ENCODE measurements at regions of chr6 and their contacts with region 1.

Region 1: DNA sequence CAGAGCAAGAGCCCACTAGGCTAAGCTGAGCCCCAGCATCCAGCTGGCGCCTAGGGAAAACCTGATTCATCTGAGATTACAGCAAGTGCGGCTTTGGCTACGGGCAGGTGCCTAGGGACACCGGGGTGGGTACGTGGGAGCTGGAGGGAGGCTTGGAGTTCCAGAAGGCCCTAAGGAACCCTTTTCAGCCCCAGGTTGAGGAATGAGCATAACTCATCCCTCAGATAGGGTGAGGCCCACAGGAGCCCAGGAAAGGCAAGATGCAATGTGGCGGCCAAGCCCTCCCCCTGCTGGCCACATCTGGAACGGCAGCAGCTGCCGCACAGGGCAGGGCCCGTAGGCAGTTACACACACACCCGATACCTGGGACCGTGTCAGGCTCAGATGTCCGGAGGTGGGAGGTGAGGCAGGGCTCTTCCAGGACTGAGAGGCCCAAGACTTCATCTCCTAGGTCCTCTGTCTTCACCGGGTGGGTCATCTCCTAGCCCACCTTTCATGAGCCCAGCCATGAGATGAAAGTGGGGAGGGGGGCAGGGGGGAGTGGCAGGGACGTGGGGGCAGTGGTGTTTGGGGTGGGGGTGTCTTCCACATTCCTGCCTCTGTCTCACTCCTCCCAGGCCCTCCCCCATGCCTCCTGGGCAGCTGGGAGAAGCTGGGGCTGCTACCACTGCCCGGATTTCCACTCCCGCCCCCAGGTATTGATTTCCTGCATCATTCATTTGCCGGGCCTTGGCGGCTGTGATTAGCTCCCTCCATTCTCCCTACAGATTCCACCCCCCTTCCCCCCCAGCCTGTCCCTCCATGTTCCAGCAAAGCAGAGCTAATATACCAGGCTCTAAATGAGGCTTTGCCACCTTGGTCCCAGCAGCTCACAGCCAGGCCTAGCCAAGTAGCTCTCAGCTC is 5.5 kb downstream of the MDGA1 start:
- DNase-seq: peak; percentile 51
- ATAC-seq: peak; percentile 94
- H3K4me3 ChIP-seq: peak overlapping the region in 1 of 2 experiments; percentile 41; a peak in 1 of 4 replicates
- H3K27ac ChIP-seq: no peak overlapping the region
- H3K4me1 ChIP-seq: peaks cover 6 to 28% of the 10 kb centered on the region in 2 experiments; a peak in 3 of 4 replicates
- H3K27me3 ChIP-seq: no peaks in the 10 kb centered on the region
- CTCF ChIP-seq: peak; percentile 91 to 98 (median 96)
- POLR2A ChIP-seq: no peak
- RAD21 ChIP-seq: peak; percentile 100

Region 2: DNA sequence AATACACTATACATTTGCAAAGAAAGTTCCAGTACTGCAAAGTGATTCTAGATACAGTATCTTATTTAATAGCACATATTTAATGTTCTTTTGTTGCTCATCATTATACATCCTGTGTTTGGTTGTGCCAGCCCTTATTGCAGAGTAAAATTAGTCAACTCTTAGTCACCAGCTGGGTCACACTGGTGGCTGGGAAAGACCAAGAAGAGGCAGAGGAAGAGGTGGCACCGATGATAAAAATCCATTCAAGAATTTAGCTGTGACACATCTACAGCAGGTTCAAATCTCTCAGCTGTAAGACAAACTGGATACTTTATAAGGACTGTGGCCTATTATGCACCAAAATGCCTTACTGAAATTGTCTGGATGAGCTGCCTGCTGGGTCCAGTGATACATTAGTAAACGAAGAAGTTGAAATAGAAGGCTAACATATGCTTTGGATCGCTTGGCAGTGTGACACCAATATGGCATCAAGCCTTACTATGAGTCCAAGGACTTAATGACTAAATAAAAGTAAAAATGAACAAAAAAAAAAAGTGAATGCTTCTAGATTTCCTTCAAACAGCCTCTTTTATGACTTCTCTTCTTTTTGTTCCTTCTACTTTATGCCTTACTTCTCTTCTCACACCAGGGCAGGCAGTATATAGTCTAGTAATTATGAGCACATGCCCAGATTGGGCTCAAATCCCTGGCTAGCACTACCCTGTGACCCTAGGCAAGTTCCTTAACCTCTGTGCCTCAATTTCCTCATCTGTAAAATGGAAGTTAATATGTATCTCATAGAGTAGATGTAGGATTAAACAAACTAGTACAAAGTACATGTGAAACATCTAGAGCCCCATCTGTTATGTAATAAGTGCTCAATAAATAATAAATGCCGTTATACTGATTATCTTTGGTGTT is 367.8 kb before region 1 on chr6:
- CTCF ChIA-PET with region 1: interaction called, 7 read pairs
- POLR2A ChIA-PET with region 1: no interaction called
- RAD21 ChIA-PET with region 1: no interaction called
- intact Hi-C with region 1: loop called (anchors 10 kb)
- DNase-seq: peak; percentile 28
- ATAC-seq: peak; percentile 35; the same call in 1 of the 2 replicates
- H3K4me3 ChIP-seq: no peak overlapping the region
- H3K27ac ChIP-seq: no peak overlapping the region
- H3K4me1 ChIP-seq: peaks cover 0 to 22% of the 10 kb centered on the region in 2 experiments; a peak in 2 of 4 replicates
- H3K27me3 ChIP-seq: no peaks in the 10 kb centered on the region
- CTCF ChIP-seq: no peak
- POLR2A ChIP-seq: no peak
- RAD21 ChIP-seq: no peak

Region 3: GRCh38 chr6:37381579-37381978 is 310.6 kb before region 1 on chr6:
- CTCF ChIA-PET with region 1: interaction called, 4 read pairs
- POLR2A ChIA-PET with region 1: no interaction called
- RAD21 ChIA-PET with region 1: no interaction called
- intact Hi-C with region 1: loop called (anchors 1 kb)
- DNase-seq: peak; percentile 74
- ATAC-seq: peak; percentile 91
- H3K4me3 ChIP-seq: no peak overlapping the region
- H3K27ac ChIP-seq: no peak overlapping the region
- H3K4me1 ChIP-seq: no peaks in the 10 kb centered on the region
- H3K27me3 ChIP-seq: no peaks in the 10 kb centered on the region
- CTCF ChIP-seq: peak; percentile 73 to 81 (median 77)
- POLR2A ChIP-seq: no peak
- RAD21 ChIP-seq: peak; percentile 72

Region 4: GRCh38 chr6:37483917-37484785 is 208.0 kb before region 1 on chr6:
- CTCF ChIA-PET with region 1: interaction called, 9 read pairs
- POLR2A ChIA-PET with region 1: no interaction called
- RAD21 ChIA-PET with region 1: interaction called in 1 of 2 experiments, 3 read pairs
- intact Hi-C with region 1: loop called (anchors 1 kb)
- DNase-seq: no peak
- ATAC-seq: peak; percentile 92
- H3K4me3 ChIP-seq: no peak overlapping the region
- H3K27ac ChIP-seq: no peak overlapping the region
- H3K4me1 ChIP-seq: no peaks in the 10 kb centered on the region
- H3K27me3 ChIP-seq: no peaks in the 10 kb centered on the region
- CTCF ChIP-seq: peak; percentile 69 to 90 (median 75); a peak in 5 of 6 replicates
- POLR2A ChIP-seq: no peak
- RAD21 ChIP-seq: peak; percentile 90

Region 5: DNA sequence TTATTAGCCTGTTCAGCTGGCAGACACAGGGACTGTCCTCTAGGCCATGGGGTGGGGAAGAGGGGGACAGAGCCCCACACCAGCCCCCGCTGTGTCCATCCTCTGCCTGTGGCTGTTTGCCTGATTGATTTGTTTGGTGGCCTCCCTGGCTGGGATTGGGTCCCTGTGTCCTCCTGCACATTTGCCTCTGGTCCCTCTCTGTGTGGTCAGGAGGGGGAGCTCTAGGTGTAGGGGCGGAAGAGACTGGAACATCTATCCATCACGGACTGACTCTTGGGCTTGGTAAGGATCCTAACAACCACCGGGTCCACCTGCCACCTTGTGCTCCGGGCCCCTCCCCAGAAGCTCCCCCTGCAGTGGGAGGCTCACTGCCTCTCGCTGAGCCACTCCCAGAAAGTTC is 154.0 kb before region 1 on chr6:
- CTCF ChIA-PET with region 1: interaction called, 40 read pairs
- POLR2A ChIA-PET with region 1: interaction called, 5 read pairs
- RAD21 ChIA-PET with region 1: interaction called, 9 to 10 read pairs
- intact Hi-C with region 1: loop called (anchors 1 kb)
- DNase-seq: peak; percentile 45
- ATAC-seq: peak; percentile 98
- H3K4me3 ChIP-seq: no peak overlapping the region
- H3K27ac ChIP-seq: no peak overlapping the region
- H3K4me1 ChIP-seq: peaks cover 0 to 9% of the 10 kb centered on the region in 2 experiments; a peak in 2 of 4 replicates
- H3K27me3 ChIP-seq: peaks cover 7% of the 10 kb centered on the region; the same call in 1 of the 2 replicates
- CTCF ChIP-seq: peak; percentile 74 to 88 (median 82)
- POLR2A ChIP-seq: no peak
- RAD21 ChIP-seq: peak; percentile 98

Region 6: DNA sequence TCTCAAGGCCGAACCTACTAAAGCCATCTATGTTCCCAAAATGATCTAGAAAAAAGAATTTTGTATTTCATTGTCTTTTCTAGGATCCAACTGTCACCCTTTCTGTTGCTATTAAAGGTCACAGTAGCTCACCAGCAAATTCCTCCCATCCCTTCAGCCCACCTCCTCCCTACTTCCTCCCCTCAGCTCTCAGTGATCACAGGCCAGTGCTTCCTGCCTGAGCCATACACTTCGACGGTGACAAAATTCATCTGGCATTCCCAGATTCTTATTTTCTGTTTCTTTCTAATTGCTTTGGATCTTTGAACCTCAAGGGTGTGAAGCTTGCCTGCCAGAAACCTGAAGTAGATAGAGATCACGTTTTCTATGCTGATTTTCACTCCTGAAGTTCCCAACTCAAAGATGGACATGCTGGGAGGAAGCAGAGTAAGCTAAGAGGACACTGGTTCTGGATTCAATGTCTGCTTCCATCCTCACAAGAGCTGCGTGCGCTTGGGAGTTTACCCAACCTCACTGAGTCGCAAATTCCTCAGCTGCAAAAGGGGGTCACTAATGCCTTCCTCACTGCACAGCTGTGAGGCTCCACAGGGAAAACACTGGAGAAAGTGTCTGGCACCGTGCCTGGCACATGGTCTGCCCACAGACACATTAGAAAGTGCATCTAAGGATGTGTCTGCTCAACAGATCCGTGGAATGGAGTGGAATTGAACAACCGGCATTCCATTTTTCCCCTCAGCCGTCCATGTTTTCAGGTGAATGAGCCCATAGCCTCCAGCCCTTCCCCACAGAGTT is 28.9 kb before region 1 on chr6:
- CTCF ChIA-PET with region 1: no interaction called
- POLR2A ChIA-PET with region 1: no interaction called
- RAD21 ChIA-PET with region 1: no interaction called
- intact Hi-C with region 1: no loop called
- DNase-seq: no peak
- ATAC-seq: no peak
- H3K4me3 ChIP-seq: no peak overlapping the region
- H3K27ac ChIP-seq: no peak overlapping the region
- H3K4me1 ChIP-seq: peaks cover 7 to 24% of the 10 kb centered on the region in 2 experiments; a peak in 3 of 4 replicates
- H3K27me3 ChIP-seq: no peaks in the 10 kb centered on the region
- CTCF ChIP-seq: no peak
- POLR2A ChIP-seq: no peak
- RAD21 ChIP-seq: no peak